H1 (cell line): ENCODE measurements at regions of chr4 and their contacts with region 1.

Region 1: DNA sequence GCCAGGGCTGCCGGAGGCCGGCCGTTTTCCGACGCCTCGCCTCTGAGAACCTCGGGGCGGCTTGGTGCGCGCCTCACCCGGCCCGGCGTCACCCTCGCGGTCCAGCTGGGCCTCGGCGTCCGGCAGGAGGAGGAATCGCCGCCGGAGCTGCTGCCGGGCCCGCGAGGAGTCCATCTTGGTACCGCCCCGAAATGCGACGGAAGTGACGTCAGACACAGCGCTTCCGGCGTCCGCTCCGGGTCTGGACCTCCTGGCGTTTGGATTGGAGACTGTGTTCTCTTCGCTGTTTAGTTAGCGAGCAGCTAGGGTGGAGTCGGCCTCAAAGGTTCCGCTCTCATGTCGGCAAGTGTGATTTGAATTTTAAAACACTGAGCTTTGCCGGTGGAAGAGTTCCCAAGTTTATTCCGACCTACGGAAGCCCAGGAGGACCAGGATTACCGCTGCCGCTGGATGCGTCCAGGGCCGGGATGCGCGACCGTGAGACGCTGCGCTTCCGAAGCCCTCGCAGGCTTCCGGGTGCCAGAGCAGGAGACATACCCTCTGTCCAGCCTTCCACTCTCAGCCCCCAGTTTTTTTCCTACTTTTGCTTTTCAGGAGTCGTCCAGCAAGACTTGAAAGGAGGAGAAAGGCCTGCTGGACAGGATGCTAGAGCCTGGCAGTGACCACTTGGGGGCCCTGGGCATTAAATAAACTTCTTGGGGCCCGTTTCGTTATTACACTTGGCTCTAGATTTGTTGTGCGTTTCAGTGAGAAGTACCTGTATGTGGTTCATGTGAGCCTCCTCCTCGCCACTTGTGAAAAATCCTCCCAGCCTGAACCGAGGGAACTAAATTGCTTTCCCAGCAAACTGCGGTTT is at the start of gene TMEM128:
- DNase-seq: peak; percentile 54 to 96
- H3K4me3 ChIP-seq: peak within 1 kb of the TSS; percentile 87 to 97 (median 90)
- H3K27ac ChIP-seq: peak within 1 kb of the TSS; percentile 88
- H3K4me1 ChIP-seq: peaks cover 0 to 6% (median 3%) of the 10 kb centered on the region in 4 experiments; a peak in 5 of 7 replicates
- H3K27me3 ChIP-seq: peaks cover 0 to 6% (median 0%) of the 10 kb centered on the region in 4 experiments; a peak in 1 of 7 replicates
- CTCF ChIP-seq: no peak
- EP300 ChIP-seq: no peak
- POLR2A ChIP-seq: peak; percentile 95 to 97
- RAD21 ChIP-seq: no peak
- total RNA-seq, gene TMEM128: 15.9 and 17.7 TPM in 2 replicates

Region 2: DNA sequence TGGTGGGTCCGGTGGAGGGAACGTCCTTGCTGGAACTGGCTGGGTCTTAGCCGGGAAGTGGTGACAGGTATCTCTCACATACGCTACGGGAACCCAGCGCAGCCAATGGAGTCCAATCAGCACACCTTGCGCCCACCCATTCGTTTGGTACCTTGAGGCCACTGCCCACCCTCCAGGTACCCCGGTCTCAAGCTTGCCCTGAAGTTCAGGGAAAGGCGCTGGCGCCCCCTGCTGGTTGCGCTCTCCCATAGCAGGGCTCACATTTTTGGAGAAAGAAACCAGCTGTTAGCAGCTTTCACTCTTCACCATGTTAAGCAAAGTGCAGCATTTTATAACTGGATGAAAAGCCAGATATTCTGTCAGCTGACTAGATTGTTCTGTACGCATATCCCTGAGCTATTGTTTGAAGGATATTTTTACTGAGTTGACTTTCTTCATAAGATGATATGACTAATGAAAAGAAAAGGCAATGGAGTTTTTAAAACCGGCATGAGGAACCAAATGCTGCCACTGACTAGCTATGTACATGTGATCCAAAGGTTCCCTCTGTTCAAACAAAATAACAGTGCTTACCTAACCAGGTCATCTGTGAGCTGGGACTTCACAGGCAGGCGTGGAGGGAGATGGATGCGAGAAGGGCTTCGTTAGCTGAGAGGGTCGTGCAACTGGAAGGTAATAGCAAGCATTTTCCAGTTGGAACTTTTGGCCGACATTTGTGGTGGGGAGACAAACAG is 65.3 kb before region 1 on chr4:
- CTCF ChIA-PET with region 1: interaction called, 10 read pairs
- POLR2A ChIA-PET with region 1: no interaction called
- DNase-seq: peak; percentile 39 to 88
- H3K4me3 ChIP-seq: no peak overlapping the region
- H3K27ac ChIP-seq: no peak overlapping the region
- H3K4me1 ChIP-seq: peaks cover 0 to 2% (median 0%) of the 10 kb centered on the region in 4 experiments; a peak in 1 of 7 replicates
- H3K27me3 ChIP-seq: no peaks in the 10 kb centered on the region
- CTCF ChIP-seq: peak; percentile 85 to 90 (median 87)
- EP300 ChIP-seq: no peak
- POLR2A ChIP-seq: no peak
- RAD21 ChIP-seq: peak; percentile 87 to 91

Region 3: GRCh38 chr4:4260253-4260652 is 12.0 kb after region 1 on chr4:
- CTCF ChIA-PET with region 1: interaction called, 11 read pairs
- POLR2A ChIA-PET with region 1: interaction called, 3 read pairs
- DNase-seq: no peak
- H3K4me3 ChIP-seq: no peak overlapping the region
- H3K27ac ChIP-seq: no peak overlapping the region
- H3K4me1 ChIP-seq: no peaks in the 10 kb centered on the region
- H3K27me3 ChIP-seq: no peaks in the 10 kb centered on the region
- CTCF ChIP-seq: peak in 2 of 3 experiments; percentile 39 to 55; a peak in 3 of 4 replicates
- EP300 ChIP-seq: no peak
- POLR2A ChIP-seq: no peak
- RAD21 ChIP-seq: peak; percentile 26 to 39; a peak in 3 of 4 replicates

Region 4: GRCh38 chr4:4284827-4285618 is 36.8 kb after region 1 on chr4:
- CTCF ChIA-PET with region 1: interaction called, 11 read pairs
- POLR2A ChIA-PET with region 1: no interaction called
- DNase-seq: no peak
- H3K4me3 ChIP-seq: no peak overlapping the region
- H3K27ac ChIP-seq: no peak overlapping the region
- H3K4me1 ChIP-seq: peaks cover 0 to 7% (median 4%) of the 10 kb centered on the region in 4 experiments; a peak in 4 of 7 replicates
- H3K27me3 ChIP-seq: no peaks in the 10 kb centered on the region
- CTCF ChIP-seq: no peak
- EP300 ChIP-seq: no peak
- POLR2A ChIP-seq: no peak
- RAD21 ChIP-seq: no peak